Heart left ventricle (tissue), 16 donors: ENCODE measurements at regions of chr6 and their contacts with region 1.

Region 1: DNA sequence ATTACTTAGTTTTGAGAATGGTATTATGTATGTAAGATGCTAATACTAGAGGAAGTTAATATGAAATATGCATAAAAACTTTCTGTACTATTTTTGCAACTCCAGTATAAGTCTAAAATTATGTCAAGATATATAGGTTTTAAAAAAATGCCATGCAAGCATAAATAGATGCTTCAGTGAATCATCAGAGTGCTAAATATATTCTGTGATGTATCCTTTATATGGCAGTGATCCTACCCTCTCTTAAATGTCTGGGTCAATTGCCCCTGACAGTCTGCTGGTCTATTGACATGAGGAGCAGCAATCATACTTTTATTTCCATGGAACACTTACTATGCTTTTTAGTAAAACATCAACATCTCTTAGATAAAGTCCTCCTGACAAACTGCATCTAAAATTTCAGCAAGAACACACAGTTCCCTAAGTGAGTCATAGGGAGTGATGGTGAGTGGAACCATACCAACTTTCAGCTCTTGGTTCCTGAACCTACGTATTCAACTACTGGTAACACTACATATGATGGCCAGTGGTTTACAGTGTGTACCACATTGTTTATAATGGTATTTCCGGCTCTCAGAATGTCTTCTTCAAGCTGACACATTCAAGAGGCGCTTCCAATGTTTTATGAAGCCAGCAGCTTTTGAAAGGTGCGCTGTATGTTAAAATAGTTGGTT is 928.7 kb upstream of the GJE1 start:
- DNase-seq: no peak
- ATAC-seq: peak in 2 of 4 donors; percentile 34 to 60
- H3K4me3 ChIP-seq: no peak overlapping the region
- H3K27ac ChIP-seq: no peak overlapping the region
- H3K4me1 ChIP-seq: peaks cover 0 to 8% (median 0%) of the 10 kb centered on the region in 12 donors
- H3K27me3 ChIP-seq: no peaks in the 10 kb centered on the region
- CTCF ChIP-seq: no peak
- POLR2A ChIP-seq: no peak

Region 2: GRCh38 chr6:140464720-140465119 is 739.3 kb before region 1 on chr6:
- intact Hi-C with region 1: loop called in 1 of 10 experiments (anchors 5 kb)
- DNase-seq: no peak
- ATAC-seq: no peak
- H3K4me3 ChIP-seq: no peak overlapping the region
- H3K27ac ChIP-seq: no peak overlapping the region
- H3K4me1 ChIP-seq: peaks cover 0 to 20% (median 6%) of the 10 kb centered on the region in 12 donors
- H3K27me3 ChIP-seq: no peaks in the 10 kb centered on the region
- CTCF ChIP-seq: no peak
- POLR2A ChIP-seq: no peak

Region 3: GRCh38 chr6:141123049-141123448 is 81.0 kb before region 1 on chr6:
- intact Hi-C with region 1: no loop called
- DNase-seq: no peak
- ATAC-seq: no peak
- H3K4me3 ChIP-seq: no peak overlapping the region
- H3K27ac ChIP-seq: no peak overlapping the region
- H3K4me1 ChIP-seq: no peaks in the 10 kb centered on the region
- H3K27me3 ChIP-seq: no peaks in the 10 kb centered on the region
- CTCF ChIP-seq: no peak
- POLR2A ChIP-seq: no peak

Region 4: DNA sequence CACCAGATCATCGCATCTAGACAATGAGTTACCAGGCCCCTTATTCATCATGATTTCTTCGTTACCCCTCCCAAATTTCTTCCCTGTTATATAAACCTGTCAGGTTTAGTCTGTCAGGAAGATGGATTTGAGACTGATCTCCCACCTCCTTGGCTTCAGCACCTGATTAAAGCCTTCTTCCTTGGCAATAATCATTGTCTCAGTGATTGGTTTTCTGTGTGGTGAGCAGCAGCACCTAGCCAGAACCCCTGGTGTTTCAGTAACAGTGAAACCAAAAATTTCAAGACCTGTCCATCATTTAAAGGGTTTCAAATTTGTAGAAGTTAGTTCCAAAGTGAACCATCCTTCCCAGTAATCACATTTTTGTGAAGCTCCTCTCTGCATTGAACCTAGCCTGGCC is 718.9 kb after region 1 on chr6:
- intact Hi-C with region 1: no loop called
- DNase-seq: no peak
- ATAC-seq: no peak
- H3K4me3 ChIP-seq: no peak overlapping the region
- H3K27ac ChIP-seq: no peak overlapping the region
- H3K4me1 ChIP-seq: no peaks in the 10 kb centered on the region
- H3K27me3 ChIP-seq: no peaks in the 10 kb centered on the region
- CTCF ChIP-seq: no peak
- POLR2A ChIP-seq: no peak

Region 5: DNA sequence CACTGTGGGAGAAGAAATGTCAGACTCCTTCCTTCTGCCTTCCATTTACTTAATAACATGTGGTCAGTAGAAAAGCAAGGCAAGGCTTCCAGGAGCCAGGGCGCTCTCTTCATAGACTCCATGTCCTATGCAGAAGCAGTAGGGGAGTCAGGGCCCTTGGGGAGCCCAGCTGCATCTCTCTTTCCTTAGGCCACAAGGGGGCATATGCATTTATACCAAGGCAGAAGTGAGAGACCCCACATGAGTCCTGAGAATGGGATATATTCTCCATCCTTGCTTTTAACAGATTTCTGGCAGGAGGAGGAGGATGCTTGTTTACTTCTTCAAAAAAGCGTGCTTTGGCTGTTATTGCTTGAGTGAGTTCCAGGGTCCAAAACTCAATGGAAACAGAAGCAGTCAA is 1542.5 kb after region 1 on chr6:
- intact Hi-C with region 1: no loop called
- DNase-seq: peak in 1 of 5 donors; percentile 25
- ATAC-seq: peak in 2 of 4 donors; percentile 53 to 56
- H3K4me3 ChIP-seq: no peak overlapping the region
- H3K27ac ChIP-seq: no peak overlapping the region
- H3K4me1 ChIP-seq: no peaks in the 10 kb centered on the region
- H3K27me3 ChIP-seq: no peaks in the 10 kb centered on the region
- CTCF ChIP-seq: peak; percentile 23 to 59 (median 45)
- POLR2A ChIP-seq: no peak